Activated CD8-positive, alpha-beta T cell treated with anti-CD3 and anti-CD28 coated beads, Interleukin-2, amount 10 ng/mL, durations not matched to agents 7 days and 5 days (primary cell): ENCODE measurements at regions of chr4 and their contacts with region 1.

Region 1: DNA sequence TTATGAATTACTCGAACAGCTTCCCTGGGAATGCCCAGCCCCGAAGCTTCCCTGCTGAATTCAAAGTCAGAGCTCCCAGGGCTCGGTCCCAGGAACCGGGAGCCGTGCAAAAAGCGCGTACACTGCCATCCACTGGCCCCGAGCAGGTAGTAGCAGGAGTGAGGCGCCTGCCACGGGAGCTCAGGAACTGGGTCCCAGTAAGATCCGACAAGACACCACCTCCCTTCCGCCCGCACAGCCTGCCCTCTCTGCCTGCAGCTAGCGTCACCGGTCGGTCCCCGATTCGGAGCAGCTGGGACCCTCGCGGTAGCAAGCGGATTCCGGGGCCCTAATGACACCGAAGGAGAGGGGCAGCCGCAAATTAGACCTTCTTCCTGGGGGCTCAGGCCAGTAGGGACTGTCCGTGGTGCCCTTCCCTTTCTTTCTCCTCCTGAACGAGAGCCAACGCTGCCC is 1.2 kb downstream of the CORIN start:
- DNase-seq: peak; percentile 71
- ATAC-seq: peak; percentile 84
- H3K4me3 Mint-ChIP-seq: peak overlapping the region; percentile 82
- H3K27ac Mint-ChIP-seq: peak overlapping the region; percentile 64
- H3K4me1 Mint-ChIP-seq: peaks cover 29% of the 10 kb centered on the region
- H3K27me3 Mint-ChIP-seq: peaks cover 9% of the 10 kb centered on the region

Region 2: DNA sequence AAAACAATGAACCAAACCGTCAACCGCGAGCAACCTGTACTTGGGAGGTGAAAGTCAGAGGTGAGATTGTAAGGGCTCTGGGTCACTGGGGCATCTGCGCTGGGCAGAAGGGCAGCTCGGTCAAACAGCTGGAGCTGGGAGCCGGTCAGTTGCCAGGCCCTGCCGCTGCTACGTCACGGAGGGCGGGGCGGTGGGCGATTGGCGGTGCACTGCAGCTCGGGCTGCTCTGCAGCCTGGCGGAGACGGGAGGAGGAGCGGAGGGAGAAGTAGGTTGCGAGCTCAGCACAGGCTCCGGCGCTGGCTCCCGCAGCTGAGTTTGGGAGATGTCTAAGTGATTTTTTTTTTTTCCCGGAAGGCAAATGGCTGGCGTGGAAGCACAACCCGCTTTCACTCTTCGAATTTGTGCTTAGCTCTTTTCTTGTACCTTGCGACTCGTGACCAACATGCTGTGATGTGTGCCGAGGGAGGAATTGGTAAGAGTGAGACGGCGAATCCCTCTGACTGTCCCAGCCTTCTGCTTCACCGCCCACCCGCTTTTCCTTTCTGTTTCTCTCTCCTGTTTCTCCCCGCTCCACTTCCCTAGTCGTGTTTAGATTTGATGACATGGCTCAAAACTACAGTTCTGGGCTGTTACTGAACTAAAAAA is 351.5 kb before region 1 on chr4 and contains the start of gene ATP10D:
- CTCF ChIA-PET with region 1: no interaction called
- POLR2A ChIA-PET with region 1: no interaction called
- DNase-seq: peak; percentile 86
- ATAC-seq: peak; percentile 100
- H3K4me3 Mint-ChIP-seq: peak within 1 kb of the TSS; percentile 90
- H3K27ac Mint-ChIP-seq: peak within 1 kb of the TSS; percentile 93
- H3K4me1 Mint-ChIP-seq: peaks cover 24% of the 10 kb centered on the region
- H3K27me3 Mint-ChIP-seq: peaks cover 5% of the 10 kb centered on the region
- total RNA-seq, gene ATP10D: 10.1 to 11.7 TPM

Region 3: GRCh38 chr4:47686294-47686872 is 150.3 kb before region 1 on chr4:
- CTCF ChIA-PET with region 1: interaction called, 19 read pairs
- POLR2A ChIA-PET with region 1: no interaction called
- DNase-seq: peak; percentile 77
- ATAC-seq: peak; percentile 77
- H3K4me3 Mint-ChIP-seq: no peak overlapping the region
- H3K27ac Mint-ChIP-seq: no peak overlapping the region
- H3K4me1 Mint-ChIP-seq: no peaks in the 10 kb centered on the region
- H3K27me3 Mint-ChIP-seq: peaks cover 12% of the 10 kb centered on the region

Region 4: GRCh38 chr4:47704693-47705325 is 131.9 kb before region 1 on chr4:
- CTCF ChIA-PET with region 1: interaction called, 20 read pairs
- POLR2A ChIA-PET with region 1: interaction called, 3 read pairs
- DNase-seq: peak; percentile 45
- ATAC-seq: peak; percentile 63
- H3K4me3 Mint-ChIP-seq: no peak overlapping the region
- H3K27ac Mint-ChIP-seq: no peak overlapping the region
- H3K4me1 Mint-ChIP-seq: no peaks in the 10 kb centered on the region
- H3K27me3 Mint-ChIP-seq: peaks cover 27% of the 10 kb centered on the region

Region 5: DNA sequence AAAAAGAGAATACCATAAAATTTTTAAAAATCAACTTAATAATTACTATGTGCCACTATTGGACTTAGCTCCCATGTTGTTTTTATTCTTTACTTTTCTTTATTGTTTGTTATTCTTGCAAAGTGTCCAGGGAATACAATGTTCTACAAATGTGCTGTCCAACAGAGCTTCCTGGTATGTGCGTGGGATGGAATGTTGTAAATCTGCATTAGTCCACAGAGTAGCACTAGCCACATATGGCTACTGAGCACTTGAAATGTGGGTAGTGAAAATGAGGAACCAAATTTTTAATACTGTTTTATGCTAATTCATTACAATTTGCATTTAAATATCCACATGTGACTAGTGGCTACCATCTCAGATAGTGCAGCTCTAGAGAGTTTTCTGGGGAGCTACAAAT is 15.5 kb after region 1 on chr4:
- CTCF ChIA-PET with region 1: interaction called, 17 read pairs
- POLR2A ChIA-PET with region 1: no interaction called
- DNase-seq: no peak
- ATAC-seq: no peak
- H3K4me3 Mint-ChIP-seq: no peak overlapping the region
- H3K27ac Mint-ChIP-seq: no peak overlapping the region
- H3K4me1 Mint-ChIP-seq: no peaks in the 10 kb centered on the region
- H3K27me3 Mint-ChIP-seq: no peaks in the 10 kb centered on the region

Region 6: DNA sequence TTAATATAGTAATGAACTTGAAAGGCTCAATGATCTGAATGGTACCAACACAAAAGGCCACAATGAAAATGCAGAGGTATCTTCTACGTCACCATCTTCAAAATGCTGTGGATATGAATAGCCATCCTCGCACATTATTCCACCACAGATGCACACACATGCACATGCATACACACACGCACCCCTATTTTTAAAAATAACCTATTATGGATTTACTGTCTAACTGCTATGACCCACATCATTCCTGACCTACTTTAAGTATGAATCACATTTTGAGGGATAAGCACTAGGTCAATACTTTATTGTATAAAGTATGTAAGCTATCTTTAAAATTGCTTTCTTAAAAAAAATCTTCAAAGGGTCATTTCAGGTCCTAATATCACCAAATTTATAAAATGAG is 25.6 kb after region 1 on chr4:
- CTCF ChIA-PET with region 1: no interaction called
- POLR2A ChIA-PET with region 1: no interaction called
- DNase-seq: no peak
- ATAC-seq: no peak
- H3K4me3 Mint-ChIP-seq: no peak overlapping the region
- H3K27ac Mint-ChIP-seq: no peak overlapping the region
- H3K4me1 Mint-ChIP-seq: no peaks in the 10 kb centered on the region
- H3K27me3 Mint-ChIP-seq: no peaks in the 10 kb centered on the region

Region 7: DNA sequence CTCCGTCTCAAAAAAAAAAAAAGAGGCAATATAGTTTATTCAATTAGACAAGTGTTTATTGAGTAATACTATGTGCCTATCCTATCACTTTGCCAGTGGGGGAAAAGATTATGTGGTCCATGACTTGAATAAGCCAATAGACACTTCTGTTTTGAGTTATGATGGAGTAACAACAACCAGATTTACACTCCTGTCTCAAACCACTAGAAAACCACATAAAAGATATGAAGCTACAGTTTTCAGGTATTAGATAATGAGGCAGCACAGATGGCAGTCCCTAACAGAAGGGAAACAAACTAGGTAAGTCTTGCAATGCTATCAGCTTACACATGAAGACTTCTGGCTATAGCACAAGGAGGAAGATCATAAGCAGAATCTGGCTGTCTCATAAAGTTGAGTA is 55.3 kb after region 1 on chr4:
- CTCF ChIA-PET with region 1: no interaction called
- POLR2A ChIA-PET with region 1: no interaction called
- DNase-seq: no peak
- ATAC-seq: no peak
- H3K4me3 Mint-ChIP-seq: no peak overlapping the region
- H3K27ac Mint-ChIP-seq: no peak overlapping the region
- H3K4me1 Mint-ChIP-seq: peaks cover 6% of the 10 kb centered on the region
- H3K27me3 Mint-ChIP-seq: no peaks in the 10 kb centered on the region